ENCODE measurements at regions of chr16 and their contacts with region 1.

Region 1: GRCh38 chr16:10594367-10594944 is 14.1 kb upstream of the EMP2 start:
- DNase-seq: peak; percentile 96
- H3K4me3 ChIP-seq: no peak overlapping the region
- H3K27ac ChIP-seq: peak overlapping the region; percentile 69
- H3K4me1 ChIP-seq: peaks cover 11% of the 10 kb centered on the region
- H3K27me3 ChIP-seq: no peaks in the 10 kb centered on the region
- CTCF ChIP-seq: no peak

Region 2: DNA sequence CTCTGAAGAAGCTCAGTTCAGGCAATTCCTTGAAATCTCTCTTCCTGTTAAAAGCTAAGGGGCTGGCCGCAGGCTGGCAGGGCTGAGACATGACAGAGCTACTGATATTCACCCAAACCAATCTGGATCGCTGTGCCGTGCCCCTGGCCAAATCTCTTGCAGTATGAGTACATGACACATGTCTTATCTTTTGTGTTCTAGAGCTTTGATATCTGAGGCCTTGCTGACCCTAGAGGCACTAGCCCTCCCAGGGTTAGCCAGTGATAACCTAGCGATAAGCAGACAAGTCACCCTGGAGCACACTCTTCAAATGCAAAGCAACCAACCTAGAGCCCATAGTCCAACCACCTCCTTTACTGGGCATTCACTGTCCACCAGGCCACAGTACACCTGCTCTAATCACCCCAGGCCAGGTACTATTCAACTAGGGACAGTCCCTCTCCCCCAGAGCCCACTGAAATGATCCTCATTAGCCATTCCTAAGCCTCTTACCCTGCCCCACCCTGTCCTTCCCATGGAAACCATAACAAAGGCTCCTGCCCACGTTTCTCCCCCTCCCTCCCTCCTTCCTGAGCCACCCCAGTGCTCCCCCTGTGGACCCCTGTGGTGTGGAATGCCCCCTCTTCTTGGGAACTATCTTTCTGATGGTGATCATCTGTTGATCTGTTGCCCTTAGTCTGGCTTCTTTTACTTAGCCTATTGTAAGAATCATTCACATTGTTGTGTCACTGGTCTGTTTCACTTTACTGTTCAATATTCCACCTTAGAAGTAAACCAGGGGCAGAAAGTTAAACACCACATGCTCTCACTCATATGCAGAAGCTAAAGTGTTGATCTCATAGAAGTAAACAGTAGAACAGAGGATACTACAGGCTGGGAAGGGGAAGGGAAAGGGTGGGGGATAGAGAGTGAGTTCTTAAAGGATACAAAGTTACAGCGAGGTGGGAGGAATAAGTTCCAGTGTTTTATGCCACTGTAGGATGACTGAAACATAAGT is 47.8 kb after region 1 on chr16:
- intact Hi-C with region 1: loop called (anchors 10 kb)
- DNase-seq: no peak
- H3K4me3 ChIP-seq: no peak overlapping the region
- H3K27ac ChIP-seq: no peak overlapping the region
- H3K4me1 ChIP-seq: peaks cover 3% of the 10 kb centered on the region
- H3K27me3 ChIP-seq: no peaks in the 10 kb centered on the region
- CTCF ChIP-seq: no peak